ENCODE measurements at regions of chr11 and their contacts with region 1.

Region 1: DNA sequence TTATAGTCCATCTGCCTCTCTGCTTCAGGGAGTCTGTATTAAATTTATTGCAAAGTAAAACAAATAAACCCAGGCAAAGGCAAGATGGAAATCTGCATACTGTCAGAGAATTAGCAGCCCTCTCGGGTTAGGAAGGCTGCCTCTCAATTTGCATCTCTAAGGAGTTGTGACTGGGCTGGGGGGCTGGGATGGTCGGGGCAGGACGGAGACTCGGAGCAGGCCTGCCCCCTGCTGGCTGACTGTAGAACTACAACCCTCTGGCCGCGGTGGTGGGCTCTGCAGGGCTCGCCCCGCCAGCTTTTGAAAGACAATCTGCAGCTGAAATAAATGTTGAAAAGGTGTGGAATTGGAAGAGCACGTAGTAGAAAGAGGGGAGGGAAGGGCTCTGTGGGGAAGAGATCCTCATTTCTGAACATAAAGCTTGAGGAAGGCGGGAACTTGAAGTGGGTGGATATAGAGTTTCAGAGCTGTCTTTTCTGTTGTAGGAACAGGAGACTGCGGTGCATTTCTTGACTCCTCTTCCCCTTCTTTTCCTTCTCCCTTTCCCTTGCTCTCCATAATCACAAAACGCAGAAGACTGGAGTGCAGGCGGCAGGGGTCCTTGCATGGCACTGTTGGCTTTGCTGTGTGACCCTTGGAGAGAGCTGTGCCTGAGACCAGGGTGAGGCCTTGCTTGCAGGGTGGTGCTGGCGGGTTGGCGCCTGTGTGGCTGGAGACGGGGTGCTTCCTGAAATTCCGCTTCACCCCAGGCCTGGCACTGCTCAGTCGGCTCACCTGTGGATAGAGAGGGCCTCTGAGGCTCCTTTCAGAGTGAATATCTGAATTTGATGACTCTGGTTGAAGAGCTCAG is 22.6 kb upstream of the PKNOX2 start:
- DNase-seq: peak; percentile 64
- ATAC-seq: peak; percentile 65

Region 2: GRCh38 chr11:124961972-124962609 is 179.8 kb before region 1 on chr11:
- intact Hi-C with region 1: loop called (anchors 5 kb)
- DNase-seq: no peak
- ATAC-seq: peak; percentile 82

Region 3: GRCh38 chr11:125070699-125071254 is 71.1 kb before region 1 on chr11:
- intact Hi-C with region 1: no loop called
- DNase-seq: peak; percentile 78
- ATAC-seq: peak; percentile 89

Region 4: GRCh38 chr11:125180413-125181305 is 38.7 kb after region 1 on chr11:
- intact Hi-C with region 1: no loop called
- DNase-seq: no peak
- ATAC-seq: no peak

Region 5: GRCh38 chr11:125287491-125288210 is 145.7 kb after region 1 on chr11:
- intact Hi-C with region 1: no loop called
- DNase-seq: no peak
- ATAC-seq: peak; percentile 40

Measured in Right ventricle myocardium superior (tissue), 1 donor.